ENCODE measurements at regions of chr2 and their contacts with region 1.

Region 1: DNA sequence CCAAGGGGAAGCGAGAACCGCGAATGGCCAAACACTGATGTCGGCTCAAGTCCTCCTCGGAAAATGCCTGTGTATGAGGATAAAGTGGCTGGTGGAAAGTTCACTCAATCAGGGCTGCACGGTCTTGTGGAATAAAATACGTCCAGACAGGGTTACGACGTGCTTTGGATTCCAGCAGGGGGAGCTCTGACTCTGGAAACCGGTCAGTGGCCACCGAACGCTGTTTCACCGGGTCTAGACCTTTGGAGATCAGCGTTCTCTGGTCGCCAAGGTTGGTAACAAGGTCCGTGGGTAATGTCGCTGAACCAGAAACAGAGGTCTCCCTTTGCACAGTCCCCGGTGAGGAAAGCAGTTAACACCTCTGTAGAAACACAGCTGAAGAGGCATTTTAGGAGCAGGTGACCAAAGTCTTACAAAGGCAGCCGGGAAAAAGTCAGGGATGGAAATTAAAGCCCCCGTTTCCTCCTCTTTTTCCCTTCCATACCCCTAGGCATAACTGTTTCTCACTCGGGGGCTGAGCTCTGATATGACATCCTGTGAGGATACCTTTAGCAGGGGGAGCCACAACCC is 47.8 kb downstream of the CDCA7 start:
- DNase-seq: peak; percentile 79
- ATAC-seq: peak; percentile 99
- H3K4me3 ChIP-seq: no peak overlapping the region
- H3K27ac ChIP-seq: no peak overlapping the region
- H3K4me1 ChIP-seq: no peaks in the 10 kb centered on the region
- H3K27me3 ChIP-seq: peaks cover 53% of the 10 kb centered on the region
- CTCF ChIP-seq: peak; percentile 96
- POLR2A ChIP-seq: no peak
- RAD21 ChIP-seq: peak; percentile 96

Region 2: GRCh38 chr2:173448938-173449471 is 46.5 kb after region 1 on chr2:
- CTCF ChIA-PET with region 1: interaction called, 7 read pairs
- POLR2A ChIA-PET with region 1: no interaction called
- dilution Hi-C with region 1: no loop called
- in situ Hi-C with region 1: no loop called
- intact Hi-C with region 1: loop called (anchors 1 kb)
- DNase-seq: peak; percentile 73
- ATAC-seq: peak; percentile 97
- H3K4me3 ChIP-seq: peak overlapping the region; percentile 25
- H3K27ac ChIP-seq: peak overlapping the region; percentile 13; the same call in 1 of the 2 replicates
- H3K4me1 ChIP-seq: no peaks in the 10 kb centered on the region
- H3K27me3 ChIP-seq: peaks cover 14% of the 10 kb centered on the region
- CTCF ChIP-seq: peak; percentile 79
- POLR2A ChIP-seq: no peak
- RAD21 ChIP-seq: peak; percentile 67

Region 3: GRCh38 chr2:173749315-173749714 is 346.8 kb after region 1 on chr2:
- CTCF ChIA-PET with region 1: no interaction called
- POLR2A ChIA-PET with region 1: no interaction called
- dilution Hi-C with region 1: no loop called
- in situ Hi-C with region 1: loop called (anchors 10 kb)
- intact Hi-C with region 1: loop called (anchors 1 kb)
- DNase-seq: peak; percentile 54
- ATAC-seq: peak; percentile 46; the same call in 1 of the 2 replicates
- H3K4me3 ChIP-seq: no peak overlapping the region
- H3K27ac ChIP-seq: no peak overlapping the region
- H3K4me1 ChIP-seq: no peaks in the 10 kb centered on the region
- H3K27me3 ChIP-seq: peaks cover 2% of the 10 kb centered on the region; the same call in 1 of the 2 replicates
- CTCF ChIP-seq: peak; percentile 49
- POLR2A ChIP-seq: no peak
- RAD21 ChIP-seq: peak; percentile 58

Region 4: GRCh38 chr2:173965329-173966025 is 563.0 kb after region 1 on chr2 and contains the start of gene SP3:
- CTCF ChIA-PET with region 1: no interaction called
- POLR2A ChIA-PET with region 1: no interaction called
- dilution Hi-C with region 1: no loop called
- in situ Hi-C with region 1: no loop called
- intact Hi-C with region 1: loop called (anchors 1 kb)
- DNase-seq: peak; percentile 97
- ATAC-seq: peak; percentile 66
- H3K4me3 ChIP-seq: peak within 1 kb of the TSS; percentile 93
- H3K27ac ChIP-seq: peak within 1 kb of the TSS; percentile 99
- H3K4me1 ChIP-seq: peaks cover 7% of the 10 kb centered on the region
- H3K27me3 ChIP-seq: no peaks in the 10 kb centered on the region
- CTCF ChIP-seq: no peak
- POLR2A ChIP-seq: no peak
- RAD21 ChIP-seq: no peak; the same call in 1 of the 2 replicates
- total RNA-seq, gene SP3: 136 and 137 TPM in 2 replicates

Region 5: GRCh38 chr2:174051741-174052583 is 649.5 kb after region 1 on chr2:
- CTCF ChIA-PET with region 1: no interaction called
- POLR2A ChIA-PET with region 1: no interaction called
- dilution Hi-C with region 1: no loop called
- in situ Hi-C with region 1: loop called (anchors 25 kb)
- intact Hi-C with region 1: no loop called
- DNase-seq: peak; percentile 83
- ATAC-seq: peak; percentile 95
- H3K4me3 ChIP-seq: no peak overlapping the region
- H3K27ac ChIP-seq: peak overlapping the region; percentile 58
- H3K4me1 ChIP-seq: peaks cover 18% of the 10 kb centered on the region
- H3K27me3 ChIP-seq: no peaks in the 10 kb centered on the region
- CTCF ChIP-seq: 0 out of 2 replicates have a peak, but pooled peaks have one; percentile 22
- POLR2A ChIP-seq: no peak
- RAD21 ChIP-seq: peak; percentile 25; the same call in 1 of the 2 replicates

Measured in IMR-90 (cell line).